ENCODE measurements at regions of chr21 and their contacts with region 1.

Region 1: GRCh38 chr21:25934771-25935224 is 200.0 kb downstream of the GABPA start:
- DNase-seq: peak; percentile 55 to 84
- ATAC-seq: peak; percentile 94 to 97 (median 95)
- H3K4me3 ChIP-seq: no peak overlapping the region
- H3K27ac ChIP-seq: peak overlapping the region; percentile 6 to 86 (median 65)
- H3K4me1 ChIP-seq: peaks cover 3 to 91% (median 54%) of the 10 kb centered on the region in 9 donors
- H3K27me3 ChIP-seq: no peaks in the 10 kb centered on the region
- CTCF ChIP-seq: no peak

Region 2: GRCh38 chr21:25895565-25896205 is 39.1 kb before region 1 on chr21:
- intact Hi-C with region 1: loop called in 1 of 10 experiments (anchors 5 kb)
- DNase-seq: no peak
- ATAC-seq: peak in 7 of 8 donors; percentile 63 to 79 (median 76)
- H3K4me3 ChIP-seq: no peak overlapping the region
- H3K27ac ChIP-seq: peak overlapping the region in 2 of 10 donors; percentile 5 to 9
- H3K4me1 ChIP-seq: peaks cover 0 to 45% (median 13%) of the 10 kb centered on the region in 9 donors
- H3K27me3 ChIP-seq: no peaks in the 10 kb centered on the region
- CTCF ChIP-seq: peak; percentile 47 to 78 (median 64)

Region 3: GRCh38 chr21:25916226-25916625 is 18.6 kb before region 1 on chr21:
- intact Hi-C with region 1: loop called in 1 of 10 experiments (anchors 2 kb)
- DNase-seq: no peak
- ATAC-seq: no peak
- H3K4me3 ChIP-seq: no peak overlapping the region
- H3K27ac ChIP-seq: no peak overlapping the region
- H3K4me1 ChIP-seq: peaks cover 0 to 25% (median 18%) of the 10 kb centered on the region in 9 donors
- H3K27me3 ChIP-seq: no peaks in the 10 kb centered on the region
- CTCF ChIP-seq: no peak

Region 4: GRCh38 chr21:26199456-26199855 is 264.7 kb after region 1 on chr21:
- intact Hi-C with region 1: no loop called
- DNase-seq: no peak
- ATAC-seq: no peak
- H3K4me3 ChIP-seq: no peak overlapping the region
- H3K27ac ChIP-seq: no peak overlapping the region
- H3K4me1 ChIP-seq: no peaks in the 10 kb centered on the region
- H3K27me3 ChIP-seq: no peaks in the 10 kb centered on the region
- CTCF ChIP-seq: no peak